ENCODE measurements at regions of chr17 and their contacts with region 1.

Region 1: DNA sequence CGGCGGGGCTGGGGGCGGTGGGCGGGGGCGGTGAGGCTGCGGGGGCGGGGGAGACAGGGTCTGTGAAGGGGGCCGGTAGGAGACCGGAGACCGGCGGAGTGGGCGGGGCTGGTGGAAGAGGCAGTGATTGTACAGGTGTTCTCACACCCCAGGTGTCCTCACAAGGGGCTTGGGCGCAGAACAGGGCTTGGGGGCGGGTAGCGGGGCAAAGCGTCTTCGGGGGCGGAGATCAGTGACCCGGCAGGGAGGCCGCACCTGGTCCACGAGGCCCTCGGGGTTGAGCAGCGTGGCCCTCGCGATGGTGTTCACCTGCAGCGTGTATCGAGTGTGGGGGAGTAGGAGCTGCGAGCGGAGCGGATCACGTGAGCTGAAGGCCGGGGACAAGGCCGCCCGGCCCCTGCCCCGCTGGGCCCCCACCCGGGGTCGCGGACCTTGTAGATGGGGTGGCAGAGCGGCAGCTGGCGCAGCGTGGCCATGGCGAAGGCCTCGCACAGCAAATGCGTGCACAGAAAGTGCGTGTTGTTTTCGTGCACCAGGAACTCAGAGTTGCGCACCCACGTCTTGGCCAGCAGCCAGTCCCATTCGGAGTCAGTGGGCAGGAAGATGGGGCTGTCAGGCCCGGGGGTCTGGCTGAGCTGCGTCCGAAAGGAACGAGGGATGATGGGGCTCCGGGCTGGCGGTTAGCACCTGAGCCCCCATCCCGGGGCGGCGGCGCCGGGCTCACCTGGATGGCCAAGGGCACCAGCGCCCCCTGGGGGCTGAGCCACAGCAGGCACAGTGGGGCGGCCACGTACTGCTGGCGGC is 8.5 kb downstream of the ALOXE3 start:
- DNase-seq: peak; percentile 38
- H3K4me3 ChIP-seq: peak overlapping the region; percentile 11 to 41 (median 40)
- H3K27ac ChIP-seq: no peak overlapping the region
- H3K4me1 ChIP-seq: peaks cover 28% of the 10 kb centered on the region
- H3K27me3 ChIP-seq: no peaks in the 10 kb centered on the region
- CTCF ChIP-seq: peak; percentile 64 to 95

Region 2: DNA sequence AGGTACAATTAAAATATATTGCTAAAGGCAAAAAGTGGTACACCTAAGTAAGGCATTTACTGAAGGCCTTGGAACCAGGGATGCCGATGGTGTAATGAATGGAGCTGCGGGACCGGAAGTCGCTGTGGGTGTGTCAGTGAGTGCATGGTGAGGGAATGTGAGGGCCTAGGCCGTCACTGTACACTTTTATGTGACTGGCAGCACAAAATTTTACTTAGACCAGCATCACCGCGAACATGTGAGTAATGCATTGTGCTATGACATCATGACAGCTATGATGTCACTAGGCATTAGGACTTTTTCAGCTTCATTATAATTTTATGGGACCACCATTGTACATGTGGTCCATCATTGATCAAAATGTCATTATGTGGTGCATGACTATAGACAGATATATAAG is 56.3 kb before region 1 on chr17:
- CTCF ChIA-PET with region 1: no interaction called
- dilution Hi-C with region 1: no loop called
- in situ Hi-C with region 1: no loop called
- intact Hi-C with region 1: no loop called
- DNase-seq: no peak
- H3K4me3 ChIP-seq: no peak overlapping the region
- H3K27ac ChIP-seq: no peak overlapping the region
- H3K4me1 ChIP-seq: peaks cover 25% of the 10 kb centered on the region
- H3K27me3 ChIP-seq: no peaks in the 10 kb centered on the region
- CTCF ChIP-seq: no peak

Region 3: DNA sequence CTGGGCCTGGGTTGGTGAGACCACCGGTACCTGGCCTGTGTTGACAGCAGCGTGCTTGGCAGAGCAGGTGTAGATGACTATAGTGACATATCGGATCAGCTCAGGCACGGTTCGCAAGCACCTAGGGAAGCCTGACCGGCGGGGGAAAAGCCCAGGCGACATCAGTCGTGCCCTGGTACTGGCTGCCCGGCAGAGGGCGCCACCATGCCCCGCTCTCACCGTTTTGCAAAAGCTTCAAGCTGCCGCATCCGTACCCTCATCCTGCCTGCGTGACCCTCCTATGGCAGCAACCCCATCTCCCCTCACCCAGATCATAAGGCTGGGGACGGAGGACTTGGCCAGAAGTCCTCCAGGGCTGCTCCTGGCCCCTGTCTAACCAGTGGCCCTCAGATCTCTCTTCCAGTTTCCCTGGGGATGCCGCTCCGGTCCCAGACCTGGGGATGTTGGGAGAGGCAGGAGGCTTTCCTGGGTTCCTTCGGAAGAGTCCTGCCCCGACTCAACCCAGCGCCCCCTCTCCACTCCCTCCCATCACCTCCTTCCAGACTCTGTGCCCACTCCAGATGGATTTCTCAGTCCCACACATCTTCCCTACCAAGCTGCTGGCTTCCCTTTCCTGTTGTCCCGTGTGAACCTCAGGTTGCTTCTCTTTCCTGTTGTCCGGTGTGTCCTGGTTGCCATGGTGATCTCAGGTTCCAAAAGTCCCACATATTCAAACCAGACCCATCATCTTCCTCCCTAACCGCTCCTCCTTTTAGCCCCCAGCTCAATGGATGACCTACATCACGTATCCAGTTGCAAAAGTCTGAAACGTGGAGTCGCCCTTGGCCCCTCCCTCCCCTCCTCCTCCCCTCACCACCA is 36.0 kb before region 1 on chr17:
- CTCF ChIA-PET with region 1: no interaction called
- dilution Hi-C with region 1: loop called (anchors 5 kb)
- in situ Hi-C with region 1: loop called (anchors 5 kb)
- intact Hi-C with region 1: no loop called
- DNase-seq: peak; percentile 62
- H3K4me3 ChIP-seq: peak overlapping the region in 2 of 3 experiments; percentile 31 to 41
- H3K27ac ChIP-seq: no peak overlapping the region
- H3K4me1 ChIP-seq: peaks cover 15% of the 10 kb centered on the region
- H3K27me3 ChIP-seq: peaks cover 7% of the 10 kb centered on the region
- CTCF ChIP-seq: peak; percentile 84 to 95

Region 4: DNA sequence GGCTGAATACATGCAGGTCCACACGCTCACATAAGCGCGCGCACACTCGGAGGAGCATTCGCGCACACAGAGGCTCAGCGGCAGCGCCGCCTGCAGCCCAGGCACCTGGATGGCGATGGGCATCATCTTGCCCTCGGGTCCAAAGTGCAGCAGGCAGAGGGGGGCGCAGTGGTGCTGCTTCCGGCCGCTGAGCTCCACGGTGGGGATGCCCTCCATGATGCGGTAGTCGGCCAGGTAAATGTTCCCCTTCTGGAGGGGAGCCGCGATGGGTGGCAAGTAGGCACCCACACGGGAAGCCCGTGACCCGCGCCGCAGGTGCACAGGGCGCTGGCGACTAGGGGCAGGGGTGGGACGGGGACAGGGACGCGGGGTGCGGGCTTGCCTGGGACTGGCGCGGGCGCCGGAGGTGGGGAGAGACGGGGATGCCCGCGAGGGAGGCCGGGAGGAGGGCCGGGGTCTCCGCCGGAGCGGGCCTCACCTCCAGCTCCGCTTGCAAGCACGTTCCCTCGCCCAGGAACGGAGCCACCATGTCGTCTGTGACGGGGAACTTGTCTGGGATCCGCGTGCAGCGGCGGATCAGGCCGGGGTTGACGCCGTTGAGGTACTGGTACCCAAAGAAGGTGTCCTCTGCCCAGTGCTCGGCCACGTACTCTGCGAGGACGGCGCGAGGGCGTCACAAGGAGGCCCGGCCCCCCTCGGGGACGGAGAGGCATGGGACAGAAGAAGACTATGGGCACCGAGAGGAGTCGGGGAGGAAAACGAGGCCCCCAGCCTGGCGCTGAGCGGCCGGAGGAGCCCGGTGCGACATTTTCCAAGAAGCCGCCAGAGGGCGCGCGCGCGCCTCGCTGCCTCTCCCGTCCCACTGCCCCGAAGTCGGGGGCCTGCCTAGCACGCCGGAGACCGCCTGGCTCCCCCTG is 30.3 kb before region 1 on chr17:
- CTCF ChIA-PET with region 1: no interaction called
- dilution Hi-C with region 1: loop called (anchors 5 kb)
- in situ Hi-C with region 1: loop called (anchors 5 kb)
- intact Hi-C with region 1: loop called (anchors 1 kb)
- DNase-seq: peak; percentile 61
- H3K4me3 ChIP-seq: peak overlapping the region; percentile 28 to 57 (median 52)
- H3K27ac ChIP-seq: no peak overlapping the region
- H3K4me1 ChIP-seq: peaks cover 19% of the 10 kb centered on the region
- H3K27me3 ChIP-seq: no peaks in the 10 kb centered on the region
- CTCF ChIP-seq: peak; percentile 54 to 85

Region 5: DNA sequence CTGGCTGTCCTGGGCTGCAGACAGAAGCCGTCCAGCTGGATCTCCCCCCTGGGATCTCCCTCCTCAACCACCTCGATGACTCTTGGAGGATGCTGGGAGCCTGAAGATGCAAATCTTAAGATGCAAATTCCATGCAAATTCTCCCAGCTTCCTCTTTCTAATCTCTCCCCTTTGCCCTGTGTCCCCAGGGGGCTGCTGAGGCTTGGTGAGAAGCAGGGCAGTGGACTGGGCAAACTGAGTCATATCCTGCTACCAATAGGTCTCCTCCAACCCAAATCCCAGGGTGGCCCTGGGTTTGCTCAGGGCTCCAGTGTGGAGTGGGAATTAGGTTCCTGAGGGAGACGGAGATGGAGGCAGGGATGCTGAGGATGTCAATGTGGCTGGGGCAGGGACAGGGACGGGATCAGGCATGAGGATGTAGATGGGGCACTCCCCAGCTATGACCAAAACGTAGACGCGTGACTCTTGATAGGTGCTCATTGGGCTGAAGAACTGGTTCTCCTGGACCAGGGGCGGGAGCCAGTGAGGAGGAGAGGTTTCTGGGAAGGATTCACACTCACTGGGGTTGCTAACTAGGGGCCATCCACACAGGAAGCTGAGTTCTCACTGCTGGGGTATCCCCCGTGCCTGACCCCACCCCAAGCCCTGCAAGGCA is 18.7 kb before region 1 on chr17:
- CTCF ChIA-PET with region 1: interaction called, 4 read pairs
- dilution Hi-C with region 1: no loop called
- in situ Hi-C with region 1: no loop called
- intact Hi-C with region 1: loop called (anchors 1 kb)
- DNase-seq: no peak
- H3K4me3 ChIP-seq: no peak overlapping the region
- H3K27ac ChIP-seq: no peak overlapping the region
- H3K4me1 ChIP-seq: peaks cover 8% of the 10 kb centered on the region
- H3K27me3 ChIP-seq: no peaks in the 10 kb centered on the region
- CTCF ChIP-seq: no peak

Region 6: DNA sequence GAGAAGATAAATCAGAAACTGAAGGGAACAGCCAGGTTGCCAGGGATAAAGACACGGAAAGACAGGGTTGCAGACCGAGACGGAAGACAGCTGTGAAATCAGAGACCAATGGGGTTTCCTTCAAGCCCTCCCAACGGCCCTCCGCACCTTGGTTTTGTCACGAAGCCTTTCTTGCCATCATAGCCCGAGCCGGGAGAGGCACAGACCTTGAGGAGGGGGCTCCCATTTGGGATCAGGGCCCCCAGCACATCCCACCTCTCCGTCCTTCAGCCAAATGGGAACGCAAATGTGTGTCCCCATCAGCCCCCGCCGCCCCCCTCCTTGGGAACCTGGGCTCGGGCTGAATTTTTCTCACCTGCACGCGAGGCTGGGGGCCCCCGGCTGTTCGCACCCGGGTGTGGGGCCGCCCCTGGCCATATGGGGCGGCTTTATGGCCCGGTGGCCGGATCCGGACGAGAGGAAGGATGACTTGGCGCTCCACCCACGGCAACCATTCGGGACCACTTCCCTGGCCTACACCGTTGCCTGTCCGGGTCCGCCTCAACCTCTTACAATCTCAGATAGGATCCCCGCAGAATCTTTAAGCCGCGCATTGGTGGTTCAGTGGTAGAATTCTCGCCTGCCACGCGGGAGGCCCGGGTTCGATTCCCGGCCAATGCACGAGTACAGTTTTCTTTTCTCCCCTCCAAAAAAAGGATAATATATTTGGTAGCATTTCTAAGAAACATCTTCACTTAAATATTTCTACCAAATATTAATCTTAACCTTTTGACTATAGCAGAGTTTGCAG is 15.5 kb after region 1 on chr17:
- CTCF ChIA-PET with region 1: no interaction called
- dilution Hi-C with region 1: no loop called
- in situ Hi-C with region 1: no loop called
- intact Hi-C with region 1: no loop called
- DNase-seq: peak; percentile 62
- H3K4me3 ChIP-seq: peak overlapping the region; percentile 61 to 75 (median 74)
- H3K27ac ChIP-seq: no peak overlapping the region
- H3K4me1 ChIP-seq: peaks cover 43% of the 10 kb centered on the region
- H3K27me3 ChIP-seq: no peaks in the 10 kb centered on the region
- CTCF ChIP-seq: no peak

Region 7: DNA sequence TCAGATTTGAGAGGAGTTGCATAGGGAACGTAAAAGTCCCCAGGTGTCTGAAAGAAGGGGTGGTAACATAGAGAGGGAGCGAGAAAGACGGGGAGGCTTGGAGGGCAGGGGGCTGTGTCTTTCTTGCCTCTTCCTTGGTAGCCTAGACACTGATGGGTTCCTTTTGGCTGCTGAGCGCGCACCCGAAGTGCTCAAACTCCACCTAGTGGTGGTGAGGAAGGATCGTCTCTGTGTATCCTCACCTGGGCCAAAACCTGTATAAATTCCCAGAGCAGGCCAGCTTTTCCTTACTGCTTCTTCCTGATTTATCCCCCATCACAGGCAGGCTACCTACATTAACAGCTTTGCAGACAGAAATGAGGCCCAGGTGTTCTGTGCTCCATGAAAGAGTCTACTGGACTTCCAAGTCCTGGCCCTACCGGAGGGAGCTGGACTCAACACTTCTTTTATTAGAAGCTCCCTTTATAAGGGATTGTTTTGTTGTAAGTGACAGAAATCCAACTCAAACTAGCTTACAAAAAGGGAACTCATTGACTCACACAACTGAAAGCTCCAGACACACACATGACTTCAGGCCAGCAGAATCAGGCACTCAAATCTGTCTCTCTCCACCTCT is 190.9 kb after region 1 on chr17:
- CTCF ChIA-PET with region 1: no interaction called
- dilution Hi-C with region 1: loop called (anchors 5 kb)
- in situ Hi-C with region 1: no loop called
- intact Hi-C with region 1: no loop called
- DNase-seq: peak; percentile 50
- H3K4me3 ChIP-seq: no peak overlapping the region
- H3K27ac ChIP-seq: no peak overlapping the region
- H3K4me1 ChIP-seq: no peaks in the 10 kb centered on the region
- H3K27me3 ChIP-seq: no peaks in the 10 kb centered on the region
- CTCF ChIP-seq: peak; percentile 89 to 90